GM10248 (cell line): ENCODE measurements at regions of chr9 and their contacts with region 1.

Region 1: DNA sequence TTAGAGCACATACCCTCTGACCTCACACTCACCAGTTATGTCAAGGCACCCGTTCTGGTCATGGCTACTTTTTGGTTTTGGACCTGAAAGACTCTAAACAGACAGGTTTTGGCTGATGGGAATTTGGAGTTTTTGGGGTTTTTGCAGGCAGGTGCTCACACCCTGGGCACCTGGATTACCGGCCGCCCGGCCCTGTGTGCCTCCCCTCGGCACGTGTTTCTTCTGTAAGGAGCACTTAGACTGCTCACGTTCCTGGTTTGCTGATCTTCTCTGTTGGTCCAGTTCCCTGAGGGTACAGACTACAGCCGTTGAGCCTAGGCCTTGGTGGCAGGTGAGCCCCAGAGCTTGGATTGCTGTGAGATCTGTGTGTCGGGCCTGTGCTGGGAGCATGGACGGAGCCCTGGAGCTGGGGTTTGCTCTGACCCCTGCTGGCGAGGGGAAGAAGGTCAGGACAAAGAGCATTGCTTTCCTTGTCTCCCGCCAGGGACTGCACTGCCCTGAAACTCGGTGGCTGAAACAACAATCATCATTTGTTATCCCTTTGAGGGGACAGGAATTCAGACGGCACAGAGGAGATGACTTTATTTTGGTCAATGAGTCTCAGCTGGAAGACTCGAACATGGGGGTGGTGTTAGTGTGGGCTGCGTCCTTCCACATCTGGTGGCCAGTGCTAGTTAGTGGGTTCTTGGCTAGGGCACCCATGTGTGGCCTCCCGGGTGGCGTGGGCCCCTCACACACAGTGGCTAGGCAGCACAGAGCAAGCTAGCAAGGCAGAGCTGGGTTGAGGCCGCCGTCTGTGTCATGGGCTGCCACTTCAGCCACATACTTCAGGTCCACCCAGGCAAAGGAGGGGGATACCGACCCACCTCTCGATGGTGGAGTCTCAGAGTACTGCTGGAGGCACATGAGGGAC is 76.4 kb downstream of the EHMT1 start:
- DNase-seq: no peak
- CTCF ChIP-seq: peak; percentile 63

Region 2: DNA sequence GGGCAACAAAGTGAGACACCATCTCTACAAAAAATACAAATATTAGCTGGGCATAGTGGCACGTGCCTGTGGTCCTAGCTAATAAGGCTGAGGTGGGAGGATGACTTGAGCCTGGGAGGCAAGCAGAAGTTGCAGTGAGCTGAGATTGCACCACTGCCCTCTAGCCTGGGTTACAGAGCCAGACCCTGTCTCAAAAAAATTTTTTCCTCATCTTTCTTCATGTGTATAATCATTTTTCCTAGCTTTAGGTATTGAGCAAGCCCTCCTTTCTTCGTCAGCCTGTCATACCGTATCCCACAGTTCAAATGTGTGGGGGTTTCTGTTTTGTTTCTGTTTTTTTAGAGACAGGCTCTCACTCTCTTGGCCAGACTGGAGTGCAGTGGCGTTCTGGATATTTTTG is 35.1 kb before region 1 on chr9:
- CTCF ChIA-PET with region 1: no interaction called
- POLR2A ChIA-PET with region 1: no interaction called
- DNase-seq: no peak
- CTCF ChIP-seq: no peak

Region 3: GRCh38 chr9:137682431-137682991 is 12.7 kb before region 1 on chr9:
- CTCF ChIA-PET with region 1: interaction called, 11 read pairs
- POLR2A ChIA-PET with region 1: no interaction called
- DNase-seq: no peak
- CTCF ChIP-seq: peak; percentile 29